ENCODE measurements at regions of chr12 and their contacts with region 1.

Region 1: GRCh38 chr12:66169221-66170170 is at the start of gene TMBIM4:
- H3K4me3 ChIP-seq: peak within 1 kb of the TSS; percentile 98
- H3K27ac ChIP-seq: peak within 1 kb of the TSS; percentile 89
- H3K4me1 ChIP-seq: no peaks in the 10 kb centered on the region
- CTCF ChIP-seq: peak; percentile 99

Region 2: DNA sequence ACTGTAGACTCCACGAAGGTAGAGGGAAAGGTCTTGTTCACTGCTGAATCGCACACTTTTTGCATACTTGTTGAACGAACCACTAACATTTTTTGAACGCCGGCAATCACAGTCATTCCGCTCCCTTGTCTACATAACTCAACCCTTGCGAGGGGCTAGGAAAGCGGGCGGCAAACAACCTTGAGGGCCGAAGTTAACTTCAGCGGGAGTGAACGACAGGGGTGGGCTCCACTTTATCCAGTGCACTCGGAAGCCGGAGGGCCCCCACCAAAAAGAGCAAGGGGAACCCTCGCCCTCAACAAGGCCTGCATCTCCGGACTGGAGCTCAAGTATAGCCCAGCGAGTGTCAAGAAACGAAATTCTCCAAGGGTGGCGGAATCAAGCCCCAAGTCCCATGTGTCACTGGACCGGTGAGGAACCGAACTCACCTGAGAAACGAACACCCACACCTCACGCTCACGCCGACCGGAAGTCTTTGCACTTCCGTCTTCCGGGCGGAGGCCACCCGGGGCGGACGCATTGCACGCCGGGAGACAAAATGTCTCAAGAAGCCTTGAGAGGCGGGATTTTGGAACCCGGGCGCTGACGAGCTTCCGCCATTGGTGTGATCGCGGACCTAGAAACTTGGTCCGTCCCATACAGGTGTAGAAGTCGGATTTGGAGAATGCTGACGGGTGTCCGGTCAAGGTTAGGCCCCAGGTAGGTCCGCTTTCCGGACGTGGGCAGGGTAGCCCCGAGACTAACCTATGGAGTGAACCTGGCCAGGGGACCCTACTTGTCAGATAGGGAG is 39.0 kb before region 1 on chr12 and contains the start of gene LLPH:
- CTCF ChIA-PET with region 1: interaction called, 3 read pairs
- POLR2A ChIA-PET with region 1: interaction called, 36 read pairs
- H3K4me3 ChIP-seq: peak within 1 kb of the TSS; percentile 99
- H3K27ac ChIP-seq: peak within 1 kb of the TSS; percentile 70
- H3K4me1 ChIP-seq: no peaks in the 10 kb centered on the region
- CTCF ChIP-seq: no peak

Region 3: GRCh38 chr12:66210840-66211239 is 41.3 kb after region 1 on chr12:
- CTCF ChIA-PET with region 1: no interaction called
- POLR2A ChIA-PET with region 1: no interaction called
- H3K4me3 ChIP-seq: no peak overlapping the region
- H3K27ac ChIP-seq: no peak overlapping the region
- H3K4me1 ChIP-seq: no peaks in the 10 kb centered on the region
- CTCF ChIP-seq: no peak

Region 4: GRCh38 chr12:66235626-66236281 is 66.3 kb after region 1 on chr12:
- CTCF ChIA-PET with region 1: interaction called, 3 read pairs
- POLR2A ChIA-PET with region 1: interaction called, 12 read pairs
- H3K4me3 ChIP-seq: peak overlapping the region; percentile 40
- H3K27ac ChIP-seq: peak overlapping the region; percentile 53; the same call in 1 of the 2 replicates
- H3K4me1 ChIP-seq: peaks cover 10% of the 10 kb centered on the region
- CTCF ChIP-seq: no peak

Region 5: DNA sequence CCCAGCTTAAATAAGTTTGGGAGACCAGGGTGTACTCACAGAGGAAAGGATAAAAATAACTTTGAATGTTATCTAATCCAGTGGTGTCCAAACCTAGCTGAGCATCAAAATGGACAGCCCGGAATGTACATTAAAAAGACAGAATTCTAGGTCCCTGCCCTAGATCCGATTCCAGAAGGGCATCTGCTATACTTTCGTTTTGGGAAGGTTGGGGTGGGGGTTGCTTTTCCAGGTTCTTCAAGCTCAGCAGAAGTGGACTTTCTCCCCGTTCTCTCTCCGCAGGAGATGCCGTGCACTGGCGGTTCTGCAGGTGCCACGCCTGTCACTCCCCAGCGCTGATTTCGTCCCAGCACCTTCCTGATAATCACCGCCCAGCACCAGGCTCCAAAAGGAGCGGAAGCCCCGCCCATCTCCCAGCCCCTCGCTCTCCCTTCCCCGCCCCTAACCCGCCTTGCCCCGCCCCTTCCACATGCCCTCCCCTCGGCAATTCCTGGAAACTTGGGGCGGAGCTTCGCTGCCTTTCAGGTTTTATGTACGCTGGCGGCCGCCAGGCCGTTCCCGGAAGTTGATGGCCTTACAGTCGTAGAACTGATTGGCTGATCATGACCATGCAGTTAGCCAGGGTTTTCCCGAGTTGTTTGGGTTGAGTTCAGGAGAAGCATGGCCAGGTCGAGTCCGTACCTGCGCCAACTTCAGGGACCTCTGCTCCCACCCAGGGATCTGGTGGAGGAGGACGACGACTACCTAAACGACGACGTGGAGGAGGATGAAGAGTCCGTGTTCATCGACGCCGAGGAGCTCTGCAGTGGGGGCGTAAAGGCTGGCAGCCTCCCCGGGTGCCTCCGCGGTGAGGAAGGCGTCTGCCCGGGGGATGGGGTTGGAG is 132.7 kb after region 1 on chr12 and contains the start of gene HELB:
- CTCF ChIA-PET with region 1: no interaction called
- POLR2A ChIA-PET with region 1: interaction called, 22 read pairs
- H3K4me3 ChIP-seq: peak within 1 kb of the TSS; percentile 85
- H3K27ac ChIP-seq: peak within 1 kb of the TSS; percentile 81
- H3K4me1 ChIP-seq: no peaks in the 10 kb centered on the region
- CTCF ChIP-seq: no peak

Measured in HEK293 (cell line).